Right ventricle myocardium inferior (tissue), 1 donor: ENCODE measurements at regions of chr5 and their contacts with region 1.

Region 1: GRCh38 chr5:151414536-151414935 is 32.9 kb upstream of the SLC36A1 start:
- DNase-seq: no peak
- ATAC-seq: no peak

Region 2: GRCh38 chr5:150931368-150931965 is 483.1 kb before region 1 on chr5:
- intact Hi-C with region 1: no loop called
- DNase-seq: no peak
- ATAC-seq: no peak

Region 3: DNA sequence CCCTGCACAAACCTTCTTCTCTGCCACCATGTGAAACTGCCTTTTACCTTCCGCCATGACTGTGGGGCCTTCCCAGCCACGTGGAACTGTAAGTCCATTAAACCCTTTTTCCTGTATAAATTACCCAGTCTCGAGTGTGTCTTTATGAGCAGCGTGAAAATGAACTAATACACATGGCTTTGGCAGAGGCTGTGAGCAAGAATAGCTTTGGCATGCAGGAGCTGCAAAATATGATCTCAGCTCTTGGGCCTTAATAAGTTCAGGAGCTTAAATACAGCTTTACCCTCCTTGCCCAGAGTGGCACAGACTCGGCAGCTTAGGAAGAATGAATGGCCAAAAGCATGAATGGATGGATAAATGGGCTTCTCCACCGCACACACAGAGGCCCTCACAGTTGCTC is 17.1 kb after region 1 on chr5:
- intact Hi-C with region 1: loop called (anchors 1 kb)
- DNase-seq: no peak
- ATAC-seq: no peak

Region 4: DNA sequence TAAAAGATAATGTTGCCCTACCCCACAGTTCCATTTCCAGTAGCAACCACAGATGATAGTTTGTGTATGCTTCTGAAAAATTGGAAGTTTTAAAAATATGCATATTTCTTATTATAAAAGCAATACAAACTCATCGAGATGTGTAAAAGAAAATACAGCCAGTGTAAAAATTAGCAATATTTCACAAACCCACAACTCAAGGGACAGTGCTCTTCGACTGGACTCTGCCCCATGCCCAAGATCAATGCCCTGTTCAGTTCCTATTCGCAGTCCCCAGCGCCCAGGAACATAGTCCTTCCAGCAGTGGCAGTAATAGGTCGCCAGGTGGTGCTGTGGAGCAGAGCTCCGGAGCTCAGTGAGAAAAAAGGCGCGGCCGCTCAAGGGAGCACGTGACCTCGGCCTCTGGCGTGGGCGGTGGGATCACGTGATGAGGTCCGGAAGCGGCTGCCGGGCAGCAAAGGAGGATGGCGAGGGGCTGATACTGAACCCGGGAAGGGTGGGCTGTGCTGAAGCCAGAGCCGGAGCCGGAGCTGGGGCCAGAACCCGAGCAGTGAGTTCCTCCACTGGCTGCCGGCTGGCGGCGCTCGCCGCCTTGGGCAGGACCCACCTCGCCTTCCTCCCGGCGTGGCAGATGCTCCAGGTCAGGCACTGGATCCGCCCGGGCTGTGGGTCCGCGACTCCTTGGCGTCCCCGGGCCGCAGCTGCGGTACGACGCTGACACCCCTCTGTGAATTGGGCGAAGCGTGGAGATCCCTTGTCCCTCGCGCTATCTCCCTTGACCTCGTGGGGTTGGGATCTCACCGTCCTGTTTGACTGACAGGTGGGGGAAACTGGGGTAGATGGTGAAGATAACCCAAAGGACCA is 32.9 kb after region 1 on chr5 and contains the start of gene SLC36A1:
- intact Hi-C with region 1: no loop called
- DNase-seq: peak; percentile 97
- ATAC-seq: peak; percentile 96
- total RNA-seq, gene SLC36A1: 5.2 TPM